ENCODE measurements at regions of chr10 and their contacts with region 1.

Region 1: DNA sequence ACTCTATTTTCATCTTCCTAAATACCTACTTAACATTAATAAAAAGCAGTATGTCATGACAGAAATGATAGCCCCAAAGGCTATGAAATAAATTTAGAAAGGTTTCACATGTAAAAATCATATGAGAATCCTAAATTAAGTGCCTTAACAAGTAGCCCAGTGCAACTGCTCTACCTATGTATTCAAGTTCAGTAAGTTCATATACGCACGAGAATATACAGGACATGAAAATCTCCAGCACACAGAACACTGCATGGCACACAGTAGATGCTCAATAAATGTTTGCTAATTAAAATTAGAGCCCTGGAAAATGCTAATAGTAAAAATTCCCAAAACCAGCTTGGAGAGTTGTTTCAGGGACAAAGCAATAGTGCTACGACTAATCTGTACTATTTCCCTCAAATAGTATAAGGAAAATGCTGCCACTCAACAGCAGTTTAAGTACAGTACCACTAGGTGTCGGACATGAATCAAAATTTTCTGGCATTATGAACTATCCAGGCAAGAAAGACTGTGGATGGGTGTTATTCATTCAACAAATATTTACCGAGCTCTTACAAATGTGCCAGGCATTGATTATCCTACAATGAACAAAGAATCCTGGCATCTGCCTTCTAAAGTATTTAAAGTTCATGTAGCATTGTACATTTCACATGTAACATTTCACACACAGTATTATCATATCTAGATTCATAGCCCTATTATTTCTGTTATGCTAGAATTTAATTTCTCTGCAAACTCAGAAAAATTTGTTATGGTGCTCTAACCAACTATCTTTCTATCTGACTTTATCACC is 80.9 kb downstream of the ARHGAP21 start:
- DNase-seq: peak; percentile 12 to 44 (median 23)
- H3K4me3 ChIP-seq: no peak overlapping the region
- H3K4me3 Mint-ChIP-seq: no peak overlapping the region
- H3K27ac ChIP-seq: no peak overlapping the region
- H3K27ac Mint-ChIP-seq: no peak overlapping the region
- H3K4me1 ChIP-seq: no peaks in the 10 kb centered on the region
- H3K4me1 Mint-ChIP-seq: peaks cover 2% of the 10 kb centered on the region
- H3K27me3 ChIP-seq: no peaks in the 10 kb centered on the region
- H3K27me3 Mint-ChIP-seq: no peaks in the 10 kb centered on the region
- CTCF ChIP-seq: peak; percentile 70

Region 2: DNA sequence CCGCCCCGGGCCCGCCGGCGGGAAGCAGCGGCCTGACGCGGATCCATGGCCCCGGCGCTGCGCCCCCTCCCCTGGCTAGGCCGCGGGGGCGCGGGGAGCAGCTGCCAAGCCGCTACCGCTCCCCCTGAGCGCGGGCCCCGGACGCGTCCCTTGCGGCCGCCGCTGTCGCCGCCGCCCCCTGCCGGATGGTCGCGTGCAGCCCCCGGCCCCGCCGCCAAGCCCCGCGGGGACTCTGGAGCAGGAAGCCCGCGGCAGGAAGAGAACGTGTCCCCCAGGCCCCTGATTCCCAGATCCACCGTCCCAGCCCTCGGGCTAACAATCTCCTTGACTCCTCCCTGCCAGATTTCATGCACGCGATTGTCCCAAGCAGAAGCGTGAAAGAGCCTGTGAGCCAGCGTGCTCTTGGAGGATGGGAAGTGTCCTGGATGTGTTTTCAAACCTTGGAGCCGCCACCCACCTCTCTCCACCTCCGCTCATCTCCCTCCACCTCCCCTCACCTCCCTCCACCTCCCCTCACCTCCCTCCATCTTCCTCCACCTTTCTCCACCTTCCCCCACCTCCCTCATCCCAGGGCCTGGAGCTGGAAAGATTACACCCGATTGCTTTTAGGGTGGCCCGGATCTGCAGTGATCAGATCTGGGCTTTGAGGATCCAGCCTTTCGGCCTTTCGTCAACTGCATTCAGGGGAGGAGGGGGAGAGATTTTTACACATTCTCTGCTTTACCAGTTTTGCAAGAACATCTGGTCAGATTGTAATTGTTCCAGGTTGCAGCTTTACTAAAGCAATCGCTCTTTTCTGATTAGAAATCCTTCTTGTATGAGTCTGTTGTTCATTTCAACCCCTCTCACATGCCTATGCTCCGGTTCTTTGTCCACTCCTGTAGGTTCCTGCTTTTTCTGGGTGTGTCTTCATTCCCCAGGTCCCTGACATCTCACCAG is 310.2 kb after region 1 on chr10:
- intact Hi-C with region 1: loop called in 1 of 2 experiments (anchors 10 kb)
- DNase-seq: peak in 1 of 3 donors; percentile 30
- H3K4me3 ChIP-seq: peak overlapping the region in 1 of 3 experiments; percentile 75
- H3K4me3 Mint-ChIP-seq: peak overlapping the region; percentile 72 to 87
- H3K27ac ChIP-seq: no peak overlapping the region
- H3K27ac Mint-ChIP-seq: no peak overlapping the region
- H3K4me1 ChIP-seq: peaks cover 2 to 15% of the 10 kb centered on the region in 2 donors
- H3K4me1 Mint-ChIP-seq: peaks cover 15% of the 10 kb centered on the region
- H3K27me3 ChIP-seq: peaks cover 0 to 21% of the 10 kb centered on the region in 2 donors
- H3K27me3 Mint-ChIP-seq: peaks cover 17 to 33% (median 22%) of the 10 kb centered on the region in 3 donors
- CTCF ChIP-seq: peak; percentile 38

Region 3: GRCh38 chr10:25080880-25081581 is 438.2 kb after region 1 on chr10:
- intact Hi-C with region 1: loop called (anchors 5 kb)
- DNase-seq: peak; percentile 15 to 42 (median 23)
- H3K4me3 ChIP-seq: no peak overlapping the region
- H3K4me3 Mint-ChIP-seq: no peak overlapping the region
- H3K27ac ChIP-seq: no peak overlapping the region
- H3K27ac Mint-ChIP-seq: no peak overlapping the region
- H3K4me1 ChIP-seq: no peaks in the 10 kb centered on the region
- H3K4me1 Mint-ChIP-seq: peaks cover 1% of the 10 kb centered on the region
- H3K27me3 ChIP-seq: no peaks in the 10 kb centered on the region
- H3K27me3 Mint-ChIP-seq: peaks cover 0 to 4% (median 2%) of the 10 kb centered on the region in 3 donors
- CTCF ChIP-seq: peak; percentile 82

Region 4: GRCh38 chr10:25615926-25616325 is 973.1 kb after region 1 on chr10:
- intact Hi-C with region 1: no loop called
- DNase-seq: no peak
- H3K4me3 ChIP-seq: no peak overlapping the region
- H3K4me3 Mint-ChIP-seq: no peak overlapping the region
- H3K27ac ChIP-seq: no peak overlapping the region
- H3K27ac Mint-ChIP-seq: no peak overlapping the region
- H3K4me1 ChIP-seq: no peaks in the 10 kb centered on the region
- H3K4me1 Mint-ChIP-seq: no peaks in the 10 kb centered on the region
- H3K27me3 ChIP-seq: no peaks in the 10 kb centered on the region
- H3K27me3 Mint-ChIP-seq: no peaks in the 10 kb centered on the region
- CTCF ChIP-seq: no peak

Measured in CD14-positive monocyte (primary cell).